ENCODE measurements at regions of chr1 and their contacts with region 1.

Region 1: DNA sequence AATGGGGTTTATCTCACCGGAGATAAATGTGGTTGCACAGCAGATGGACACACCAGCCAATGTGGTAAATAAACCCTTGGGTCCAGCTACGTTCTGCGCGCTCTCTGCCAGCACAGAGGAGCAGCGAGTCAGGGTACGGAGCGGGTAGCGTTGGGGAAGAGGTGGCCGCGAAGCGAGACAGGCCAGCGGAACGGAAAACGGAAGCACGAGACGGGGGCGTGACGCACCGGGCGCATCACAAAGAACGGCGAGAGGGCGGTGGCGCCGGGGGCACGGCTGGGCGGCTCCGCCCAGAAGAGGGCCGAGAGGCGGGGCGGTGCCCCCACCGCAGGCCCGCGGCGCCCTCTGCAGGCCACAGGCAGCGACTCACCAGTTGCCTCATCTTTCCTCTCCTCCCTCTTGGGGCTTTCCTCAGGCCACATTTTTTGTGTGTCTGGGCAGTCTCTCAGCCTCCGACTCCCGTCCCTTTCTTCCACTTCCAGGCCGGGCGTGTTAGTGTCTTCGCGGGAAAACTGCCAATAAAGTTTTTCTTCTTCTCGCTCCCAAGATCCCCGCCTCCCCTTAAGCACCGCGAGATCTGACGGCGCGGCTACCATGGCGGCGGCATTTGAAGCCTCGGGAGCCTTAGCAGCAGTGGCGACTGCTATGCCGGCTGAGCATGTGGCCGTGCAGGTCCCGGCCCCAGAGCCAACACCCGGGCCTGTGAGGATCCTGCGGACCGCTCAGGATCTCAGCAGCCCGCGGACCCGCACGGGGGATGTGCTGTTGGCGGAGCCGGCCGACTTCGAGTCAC is at the start of gene DDX20:
- DNase-seq: peak; percentile 81 to 95 (median 90)
- H3K4me3 ChIP-seq: peak within 1 kb of the TSS; percentile 58 to 96 (median 87)
- H3K27ac ChIP-seq: peak within 1 kb of the TSS; percentile 55 to 97 (median 92)
- H3K27me3 ChIP-seq: no peaks in the 10 kb centered on the region
- CTCF ChIP-seq: peak; percentile 87 to 99 (median 96)
- total RNA-seq, gene DDX20: 4.2 to 18.7 (median 8.9) TPM

Region 2: DNA sequence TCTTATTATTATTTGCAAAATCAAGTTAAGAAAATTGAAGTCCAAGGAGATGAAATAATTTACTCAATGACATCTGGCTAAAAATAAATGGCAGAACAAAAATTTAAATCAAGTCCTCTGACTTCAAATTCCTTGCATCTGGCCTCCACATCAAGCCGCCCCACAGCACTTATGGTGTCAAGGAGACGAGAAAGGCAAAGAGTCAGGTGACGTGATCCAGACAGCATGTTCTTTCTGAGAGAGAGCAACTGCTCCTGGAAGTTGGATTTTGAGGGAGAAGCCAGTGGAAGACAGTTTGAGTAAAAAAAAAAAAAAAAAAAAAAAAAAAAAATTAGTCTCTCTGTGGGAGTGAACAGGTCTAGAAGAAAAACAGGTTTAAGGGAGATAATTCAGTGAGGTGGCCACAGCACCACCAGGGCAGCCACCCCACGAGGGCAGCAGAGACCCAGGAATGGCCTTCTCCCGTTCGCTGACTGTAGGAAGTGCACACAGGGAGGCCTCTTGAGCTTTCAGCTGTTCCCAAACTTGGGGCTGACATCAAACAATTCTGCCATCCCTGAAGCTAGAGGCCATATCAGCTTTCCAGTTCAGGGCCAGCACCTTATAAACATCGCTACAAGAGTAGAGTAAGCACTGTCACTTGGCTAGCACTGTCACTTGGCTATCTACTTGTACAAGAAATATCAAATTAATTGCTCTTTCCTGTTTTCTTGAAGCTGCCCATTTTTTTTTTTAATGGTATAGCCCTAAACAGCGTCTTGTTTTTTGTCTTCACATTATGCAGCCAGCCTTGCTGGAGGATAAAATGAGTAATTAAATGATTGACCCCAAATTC is 273.9 kb before region 1 on chr1:
- intact Hi-C with region 1: loop called in 1 of 2 experiments (anchors 5 kb)
- DNase-seq: peak; percentile 43 to 87 (median 80)
- H3K4me3 ChIP-seq: no peak overlapping the region
- H3K27ac ChIP-seq: peak overlapping the region in 33 of 59 donors; percentile 6 to 80 (median 42)
- H3K27me3 ChIP-seq: no peaks in the 10 kb centered on the region
- CTCF ChIP-seq: peak in 55 of 56 donors; percentile 18 to 88 (median 74)

Region 3: GRCh38 chr1:111507411-111508201 is 247.9 kb before region 1 on chr1:
- intact Hi-C with region 1: loop called in 1 of 2 experiments (anchors 1 kb)
- DNase-seq: peak in 6 of 10 donors; percentile 46 to 67 (median 54)
- H3K4me3 ChIP-seq: peak overlapping the region in 53 of 59 donors; percentile 16 to 60 (median 39)
- H3K27ac ChIP-seq: peak overlapping the region; percentile 40 to 97 (median 90)
- H3K27me3 ChIP-seq: no peaks in the 10 kb centered on the region
- CTCF ChIP-seq: no peak

Region 4: DNA sequence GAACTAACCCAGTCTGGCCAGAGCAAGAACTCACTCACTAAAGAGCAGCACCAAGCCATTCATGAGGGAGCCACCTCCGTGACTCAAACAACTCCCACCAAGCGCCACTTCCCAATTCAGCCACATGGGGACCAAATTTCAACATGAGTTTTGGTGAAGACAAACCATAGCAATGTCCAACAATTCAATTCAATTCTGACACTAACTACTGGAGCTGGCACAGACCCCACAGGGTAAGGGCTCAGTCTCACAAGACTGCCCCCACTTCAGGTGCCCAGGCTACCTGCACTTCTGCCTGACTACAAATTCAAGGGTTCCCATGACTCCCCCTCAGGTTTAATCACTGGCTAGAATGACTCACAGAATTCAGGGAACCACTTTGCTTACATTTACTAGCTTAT is 184.7 kb before region 1 on chr1:
- intact Hi-C with region 1: no loop called
- DNase-seq: no peak
- H3K4me3 ChIP-seq: no peak overlapping the region
- H3K27ac ChIP-seq: no peak overlapping the region
- H3K27me3 ChIP-seq: no peaks in the 10 kb centered on the region
- CTCF ChIP-seq: peak in 20 of 56 donors; percentile 7 to 40 (median 22)

Region 5: GRCh38 chr1:111720274-111720976 is 35.1 kb before region 1 on chr1:
- intact Hi-C with region 1: loop called in 1 of 2 experiments (anchors 1 kb)
- DNase-seq: no peak
- H3K4me3 ChIP-seq: no peak overlapping the region
- H3K27ac ChIP-seq: peak overlapping the region in 49 of 59 donors; percentile 4 to 79 (median 58)
- H3K27me3 ChIP-seq: no peaks in the 10 kb centered on the region
- CTCF ChIP-seq: no peak

Region 6: DNA sequence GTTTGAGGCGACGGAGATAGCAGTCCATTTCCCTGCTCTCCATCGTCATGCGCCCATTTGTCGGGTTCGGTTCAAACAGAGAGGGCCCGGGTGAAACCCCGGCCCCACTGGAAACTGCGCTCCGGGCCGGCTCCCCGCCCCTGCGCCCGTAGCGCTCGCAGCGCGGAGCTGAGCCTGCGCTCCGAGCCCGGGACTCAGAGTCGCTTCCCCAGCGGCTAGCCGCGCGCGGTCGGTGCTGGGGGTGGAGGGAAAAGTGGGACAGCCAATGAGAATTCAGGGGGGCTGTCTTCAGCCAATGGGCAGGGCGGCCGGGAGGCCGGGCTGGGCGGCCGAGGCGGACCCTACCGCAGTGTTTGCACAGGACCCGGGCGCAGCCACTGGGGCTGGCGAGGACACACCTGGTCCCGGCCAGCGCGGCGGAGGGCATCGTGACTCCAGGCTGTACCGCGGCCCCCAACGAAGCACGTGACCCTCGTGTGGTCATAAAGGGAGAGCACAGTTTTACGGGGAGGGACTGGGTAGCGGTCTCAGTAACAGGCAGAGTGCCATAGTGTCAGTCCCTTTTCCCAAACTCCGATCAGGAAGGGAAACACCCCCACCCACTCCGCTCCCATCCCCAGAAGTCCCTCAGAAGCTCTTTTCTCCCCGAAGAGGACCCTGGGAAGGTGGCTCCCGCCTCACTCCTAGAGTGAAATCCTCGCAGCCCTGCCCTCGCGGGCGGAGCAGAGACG is 16.2 kb before region 1 on chr1 and contains the start of gene INKA2:
- intact Hi-C with region 1: loop called (anchors 1 kb)
- DNase-seq: peak; percentile 81 to 95 (median 92)
- H3K4me3 ChIP-seq: peak within 1 kb of the TSS; percentile 52 to 87 (median 75)
- H3K27ac ChIP-seq: peak within 1 kb of the TSS; percentile 56 to 96 (median 91)
- H3K27me3 ChIP-seq: no peaks in the 10 kb centered on the region
- CTCF ChIP-seq: peak in 20 of 56 donors; percentile 1 to 44 (median 14)
- total RNA-seq, gene INKA2: 14.0 to 81.6 (median 44.7) TPM

Region 7: GRCh38 chr1:112040891-112041740 is 285.6 kb after region 1 on chr1:
- intact Hi-C with region 1: no loop called
- DNase-seq: no peak
- H3K4me3 ChIP-seq: no peak overlapping the region
- H3K27ac ChIP-seq: no peak overlapping the region
- H3K27me3 ChIP-seq: peaks cover 0 to 9% (median 0%) of the 10 kb centered on the region in 45 donors
- CTCF ChIP-seq: no peak

Measured in dorsolateral prefrontal cortex (tissue), 120 donors.